HEK293T (cell line): ENCODE measurements at regions of chr21 and their contacts with region 1.

Region 1: GRCh38 chr21:31098576-31099005 is 60.3 kb upstream of the KRTAP19-8 start:
- DNase-seq: peak; percentile 86

Region 2: GRCh38 chr21:31064803-31065202 is 33.8 kb before region 1 on chr21:
- CTCF ChIA-PET with region 1: no interaction called
- POLR2A ChIA-PET with region 1: no interaction called
- DNase-seq: no peak

Region 3: GRCh38 chr21:31180256-31181081 is 81.9 kb after region 1 on chr21:
- CTCF ChIA-PET with region 1: interaction called, 13 read pairs
- POLR2A ChIA-PET with region 1: no interaction called
- DNase-seq: peak; percentile 52